Activated CD4-positive, alpha-beta memory T cell treated with anti-CD3 and anti-CD28 coated beads for 36 hours (primary cell): ENCODE measurements at regions of chr10 and their contacts with region 1.

Region 1: GRCh38 chr10:119207367-119207668 is at the start of gene GRK5:
- DNase-seq: peak; percentile 96
- H3K4me3 Mint-ChIP-seq: peak within 1 kb of the TSS; percentile 100
- H3K27ac Mint-ChIP-seq: peak within 1 kb of the TSS; percentile 91
- H3K4me1 Mint-ChIP-seq: peaks cover 38% of the 10 kb centered on the region
- H3K27me3 Mint-ChIP-seq: no peaks in the 10 kb centered on the region
- total RNA-seq, gene GRK5: 22.7 to 23.0 TPM

Region 2: GRCh38 chr10:119189811-119190282 is 17.5 kb before region 1 on chr10:
- CTCF ChIA-PET with region 1: interaction called, 21 read pairs
- POLR2A ChIA-PET with region 1: interaction called, 3 read pairs
- intact Hi-C with region 1: no loop called
- DNase-seq: peak; percentile 33
- H3K4me3 Mint-ChIP-seq: no peak overlapping the region
- H3K27ac Mint-ChIP-seq: no peak overlapping the region
- H3K4me1 Mint-ChIP-seq: peaks cover 18% of the 10 kb centered on the region
- H3K27me3 Mint-ChIP-seq: no peaks in the 10 kb centered on the region

Region 3: DNA sequence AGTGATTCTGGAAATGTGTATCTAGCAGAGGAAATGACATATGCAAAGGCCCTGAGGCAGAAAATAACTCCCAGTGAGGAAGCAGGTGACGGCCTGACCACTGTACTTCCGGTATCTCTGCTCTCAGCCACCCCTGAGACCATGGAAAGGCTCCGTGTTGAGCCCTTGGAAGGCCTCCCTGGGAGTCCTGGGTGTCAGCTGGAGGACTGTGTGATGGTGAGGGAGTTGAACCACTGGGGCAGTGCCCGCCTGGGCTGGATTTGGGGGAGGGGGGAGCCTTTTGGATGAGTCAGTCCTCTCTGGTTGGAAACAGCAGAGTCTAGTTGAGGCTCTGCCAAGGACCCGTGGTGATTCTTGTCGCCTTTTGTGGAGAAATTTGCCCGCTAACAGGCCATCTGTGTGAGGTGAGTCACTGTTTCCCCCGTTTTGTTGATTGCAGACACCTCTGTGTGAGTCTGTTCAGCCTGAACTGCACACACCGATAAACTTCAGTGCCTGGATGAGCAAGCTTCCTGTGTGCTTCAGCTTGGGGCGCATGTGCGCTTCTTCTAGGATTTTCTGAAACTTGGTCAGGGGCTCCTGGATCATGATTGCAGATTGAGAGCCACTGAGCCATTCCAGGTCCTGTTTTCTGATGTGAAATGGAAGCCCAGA is 98.7 kb after region 1 on chr10:
- CTCF ChIA-PET with region 1: interaction called, 24 read pairs
- POLR2A ChIA-PET with region 1: interaction called, 18 read pairs
- intact Hi-C with region 1: loop called (anchors 1 kb)
- DNase-seq: peak; percentile 95
- H3K4me3 Mint-ChIP-seq: peak overlapping the region; percentile 63
- H3K27ac Mint-ChIP-seq: peak overlapping the region; percentile 100
- H3K4me1 Mint-ChIP-seq: peaks cover 67% of the 10 kb centered on the region
- H3K27me3 Mint-ChIP-seq: no peaks in the 10 kb centered on the region

Region 4: DNA sequence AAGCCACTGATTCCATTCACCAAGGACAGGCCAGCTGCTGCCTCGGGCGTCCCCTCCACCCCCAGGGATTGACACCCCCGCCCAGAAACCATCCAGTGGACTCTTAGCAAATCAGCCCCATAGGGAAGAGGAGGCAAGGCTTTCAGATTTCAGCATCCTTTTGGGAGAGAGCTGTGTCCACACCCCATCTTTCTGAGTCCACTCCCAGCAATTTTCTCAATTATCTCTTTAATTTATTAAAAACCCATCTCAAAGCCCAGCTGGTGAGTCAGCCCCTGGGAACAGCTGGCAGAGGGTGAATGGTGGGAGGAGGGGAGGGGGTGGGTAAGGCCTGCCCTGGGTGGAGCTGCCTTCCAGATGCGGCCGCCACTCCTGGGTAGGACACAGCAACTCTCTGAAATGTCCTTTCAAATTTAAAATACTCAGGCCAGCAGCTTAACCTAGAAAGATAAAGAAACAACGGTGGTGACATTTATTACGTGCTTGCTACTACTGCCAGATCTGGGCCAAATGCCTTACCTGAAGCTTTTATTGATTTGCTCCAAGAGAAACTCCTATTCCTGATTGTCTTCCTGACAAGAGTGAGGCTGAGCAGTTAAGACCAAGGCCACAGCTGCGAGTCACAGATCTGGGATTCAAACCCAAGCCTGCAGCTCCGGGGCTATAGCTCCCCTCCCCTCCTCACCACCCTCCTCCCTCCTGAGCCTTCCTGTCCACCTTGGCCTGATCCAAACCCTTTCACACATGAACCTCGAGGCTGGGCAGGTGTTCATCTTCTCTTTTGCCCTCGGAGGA is 214.8 kb after region 1 on chr10:
- CTCF ChIA-PET with region 1: interaction called, 53 read pairs
- POLR2A ChIA-PET with region 1: interaction called, 5 read pairs
- intact Hi-C with region 1: loop called (anchors 1 kb)
- DNase-seq: no peak
- H3K4me3 Mint-ChIP-seq: no peak overlapping the region
- H3K27ac Mint-ChIP-seq: no peak overlapping the region
- H3K4me1 Mint-ChIP-seq: no peaks in the 10 kb centered on the region
- H3K27me3 Mint-ChIP-seq: no peaks in the 10 kb centered on the region

Region 5: DNA sequence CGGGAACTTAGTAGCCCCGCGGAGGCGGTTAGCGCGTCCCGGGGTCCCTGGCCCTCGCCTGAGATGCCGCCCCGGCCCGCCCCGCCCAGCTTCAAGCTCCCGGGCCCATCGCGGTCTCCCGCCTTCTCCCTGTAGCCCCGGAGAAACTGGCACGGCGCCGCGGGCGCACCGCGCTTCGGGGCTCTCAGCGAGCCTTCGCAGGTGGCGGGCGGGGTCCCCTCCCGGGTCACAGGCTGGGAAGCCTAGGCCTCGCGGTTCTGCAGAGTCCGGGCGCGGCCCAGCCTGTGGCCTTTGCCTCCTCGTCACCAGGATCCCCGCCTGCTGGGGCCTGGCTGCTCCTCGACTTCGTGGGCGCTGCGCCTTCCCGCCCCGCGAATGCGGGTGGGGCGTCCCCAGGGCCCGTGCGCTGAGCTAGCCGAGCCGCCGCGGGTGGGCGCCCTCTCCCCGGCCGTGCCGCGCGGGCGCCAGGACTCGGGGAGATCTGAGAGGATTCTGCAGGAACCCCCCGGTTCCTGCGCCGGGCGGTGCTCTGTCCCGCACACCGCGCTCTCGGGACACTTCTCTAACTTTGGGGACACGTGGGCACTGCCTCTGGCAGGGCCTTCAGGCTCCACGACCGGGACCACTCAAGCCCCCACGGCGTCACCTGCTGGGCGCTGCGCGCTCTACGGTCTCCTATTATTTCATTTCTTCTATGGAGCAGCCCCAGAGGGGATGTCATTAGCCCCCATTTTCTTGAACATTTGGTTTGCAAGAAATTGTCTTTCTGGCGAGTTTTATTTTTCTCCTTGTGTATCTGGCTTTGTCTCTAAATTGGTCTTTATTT is 335.9 kb after region 1 on chr10:
- CTCF ChIA-PET with region 1: interaction called, 23 read pairs
- POLR2A ChIA-PET with region 1: interaction called, 9 read pairs
- intact Hi-C with region 1: loop called (anchors 2 kb)
- DNase-seq: peak; percentile 79
- H3K4me3 Mint-ChIP-seq: peak overlapping the region; percentile 81
- H3K27ac Mint-ChIP-seq: peak overlapping the region; percentile 87
- H3K4me1 Mint-ChIP-seq: peaks cover 33% of the 10 kb centered on the region
- H3K27me3 Mint-ChIP-seq: no peaks in the 10 kb centered on the region